Mammary epithelial cell (primary cell): ENCODE measurements at regions of chr16 and their contacts with region 1.

Region 1: GRCh38 chr16:11535471-11535870 is 51.2 kb downstream of the LITAF start:
- DNase-seq: peak; percentile 82
- H3K4me3 ChIP-seq: no peak overlapping the region
- H3K27ac ChIP-seq: no peak overlapping the region
- H3K4me1 ChIP-seq: peaks cover 12% of the 10 kb centered on the region
- H3K27me3 ChIP-seq: no peaks in the 10 kb centered on the region
- CTCF ChIP-seq: no peak

Region 2: DNA sequence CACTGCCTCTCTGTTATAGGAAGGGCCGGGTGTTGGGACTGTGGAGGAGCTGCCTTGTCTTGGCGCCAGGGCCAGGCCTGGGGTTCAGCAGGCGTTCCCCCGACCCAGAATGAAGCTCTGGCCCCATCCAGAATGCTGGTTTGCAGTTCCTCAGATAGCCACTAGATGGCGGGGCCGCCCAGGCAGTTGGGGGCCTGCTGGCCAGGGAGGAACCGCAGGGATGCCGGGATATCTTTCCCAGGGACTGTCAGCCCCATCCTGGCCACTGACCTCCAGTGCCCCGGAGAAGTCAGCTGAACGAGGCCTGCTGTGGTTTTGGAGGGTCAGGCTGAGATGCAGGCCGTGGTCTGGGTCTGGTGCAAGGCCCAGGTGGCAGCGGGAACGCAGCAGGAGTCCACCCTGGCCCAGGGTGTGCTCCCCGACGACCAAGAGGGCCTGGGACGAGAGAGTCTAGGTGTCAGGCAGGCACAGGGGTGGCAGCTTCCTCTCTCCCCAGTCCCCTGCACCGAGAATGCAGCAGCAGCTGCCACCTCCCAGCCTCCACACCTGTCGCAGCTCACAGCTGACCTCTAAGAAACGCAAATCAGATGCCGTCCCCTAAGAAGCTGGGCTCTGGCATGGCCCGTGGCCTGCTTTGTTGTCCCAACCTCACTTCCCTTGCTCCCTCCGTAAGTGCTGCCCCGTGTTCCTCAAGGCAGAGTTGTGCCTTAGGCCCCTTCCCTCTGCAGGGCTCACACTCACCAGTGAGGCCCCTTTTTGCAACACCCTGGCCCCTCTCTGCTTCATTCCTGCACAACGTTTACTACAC is 139.0 kb before region 1 on chr16:
- CTCF ChIA-PET with region 1: no interaction called
- dilution Hi-C with region 1: no loop called
- in situ Hi-C with region 1: no loop called
- intact Hi-C with region 1: loop called (anchors 1 kb)
- DNase-seq: peak; percentile 39
- H3K4me3 ChIP-seq: no peak overlapping the region
- H3K27ac ChIP-seq: no peak overlapping the region
- H3K4me1 ChIP-seq: no peaks in the 10 kb centered on the region
- H3K27me3 ChIP-seq: no peaks in the 10 kb centered on the region
- CTCF ChIP-seq: peak; percentile 96 to 98

Region 3: DNA sequence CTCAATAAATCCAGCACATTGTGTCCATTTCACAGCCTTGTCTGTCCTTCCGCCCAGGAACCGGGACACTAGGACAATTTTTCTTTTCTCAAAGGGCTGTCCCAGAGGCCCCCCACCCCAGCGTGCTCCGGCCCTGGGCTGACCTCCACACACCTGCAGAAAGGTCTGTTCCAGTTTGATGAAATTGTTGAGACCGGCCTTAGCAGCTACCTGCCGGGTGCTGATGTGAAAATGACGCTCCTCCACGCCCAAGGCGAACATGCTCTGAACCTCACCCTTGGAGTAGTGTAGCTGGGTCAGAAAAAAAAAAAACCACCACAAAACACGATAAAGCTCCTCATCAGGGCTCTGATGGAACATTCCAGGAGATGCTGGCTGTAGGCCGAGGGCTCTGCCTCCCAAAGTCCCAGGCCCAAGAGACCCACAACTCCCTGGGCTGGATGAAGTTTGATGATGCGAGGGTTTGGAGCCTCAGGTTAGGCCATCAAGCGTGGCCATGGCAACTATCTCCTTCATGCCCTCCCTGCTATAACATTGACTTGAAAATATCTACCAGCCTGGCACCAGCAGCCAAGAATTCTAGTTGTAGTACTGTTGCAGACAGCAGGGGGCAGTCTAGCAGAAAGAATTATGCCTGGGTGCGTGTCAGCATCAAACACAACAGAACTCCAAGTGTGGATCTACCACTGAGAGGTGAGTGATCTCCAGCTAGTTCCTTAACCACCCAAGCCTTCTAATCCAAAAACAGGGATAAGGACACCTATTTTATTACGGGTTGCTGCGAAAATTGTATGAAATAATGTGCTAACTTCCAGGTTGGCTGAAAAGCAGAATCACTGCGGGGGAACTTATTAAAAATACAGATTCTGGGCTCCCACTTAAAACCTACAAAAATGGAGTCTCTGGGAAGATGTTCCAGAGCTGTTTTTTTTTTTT is 128.2 kb before region 1 on chr16:
- CTCF ChIA-PET with region 1: no interaction called
- dilution Hi-C with region 1: no loop called
- in situ Hi-C with region 1: loop called in 1 of 2 experiments (anchors 5 kb)
- intact Hi-C with region 1: no loop called
- DNase-seq: peak; percentile 65
- H3K4me3 ChIP-seq: no peak overlapping the region
- H3K27ac ChIP-seq: no peak overlapping the region
- H3K4me1 ChIP-seq: no peaks in the 10 kb centered on the region
- H3K27me3 ChIP-seq: no peaks in the 10 kb centered on the region
- CTCF ChIP-seq: peak; percentile 76 to 77

Region 4: DNA sequence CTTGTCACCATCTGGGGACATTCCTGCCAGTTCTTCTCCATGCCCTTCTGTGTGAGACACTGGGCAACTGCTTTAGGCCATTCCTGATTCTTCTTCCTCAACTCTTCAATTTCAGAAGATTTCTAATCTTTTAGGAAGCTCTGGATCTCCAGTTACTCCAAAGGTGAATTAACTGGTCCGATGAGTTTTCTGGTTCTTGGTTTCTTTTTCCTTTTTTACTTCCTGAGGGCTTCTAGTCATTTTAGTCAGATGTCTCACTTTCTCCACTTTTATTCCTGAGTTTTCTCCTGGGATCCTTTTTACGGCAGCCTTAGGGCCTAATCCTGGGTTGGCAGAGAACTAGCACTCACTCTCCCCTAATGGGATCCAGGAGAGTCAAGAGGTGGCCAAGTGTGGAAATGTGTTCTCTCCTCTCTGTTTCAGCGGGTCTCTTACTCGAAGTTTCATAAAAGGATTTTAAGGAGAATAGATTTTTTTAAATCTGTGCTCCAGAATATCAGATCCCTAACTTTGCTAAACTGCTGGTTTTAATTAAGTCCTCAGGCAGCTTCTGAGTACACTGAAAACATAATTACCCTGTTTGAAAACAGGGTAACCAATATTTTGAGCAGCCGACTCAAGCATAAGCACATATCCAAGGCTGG is 82.6 kb before region 1 on chr16:
- CTCF ChIA-PET with region 1: no interaction called
- dilution Hi-C with region 1: loop called (anchors 5 kb)
- in situ Hi-C with region 1: no loop called
- intact Hi-C with region 1: no loop called
- DNase-seq: no peak
- H3K4me3 ChIP-seq: no peak overlapping the region
- H3K27ac ChIP-seq: no peak overlapping the region
- H3K4me1 ChIP-seq: no peaks in the 10 kb centered on the region
- H3K27me3 ChIP-seq: peaks cover 2% of the 10 kb centered on the region
- CTCF ChIP-seq: no peak

Region 5: DNA sequence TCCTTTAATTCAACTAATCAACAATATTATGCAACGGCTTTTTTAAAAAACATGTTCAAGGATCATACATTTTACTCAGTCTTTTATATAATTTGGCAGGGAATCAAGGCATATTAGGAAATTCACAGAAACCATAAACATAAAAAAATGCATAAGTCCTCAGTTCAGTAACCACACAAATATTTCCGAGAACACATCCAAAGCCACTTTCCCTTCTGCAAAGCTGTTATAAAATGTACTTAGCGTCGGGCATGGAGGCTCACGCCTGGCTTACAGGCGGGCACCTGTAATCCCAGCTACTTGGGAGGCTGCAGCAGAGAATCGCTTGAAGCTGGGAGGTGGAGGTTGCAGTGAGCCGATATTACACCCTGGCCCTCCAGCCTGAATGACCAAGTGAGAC is 271.2 kb after region 1 on chr16:
- CTCF ChIA-PET with region 1: no interaction called
- dilution Hi-C with region 1: no loop called
- in situ Hi-C with region 1: no loop called
- intact Hi-C with region 1: loop called (anchors 5 kb)
- DNase-seq: peak; percentile 56
- H3K4me3 ChIP-seq: no peak overlapping the region
- H3K27ac ChIP-seq: no peak overlapping the region
- H3K4me1 ChIP-seq: no peaks in the 10 kb centered on the region
- H3K27me3 ChIP-seq: no peaks in the 10 kb centered on the region
- CTCF ChIP-seq: no peak